ENCODE measurements at regions of chr6 and their contacts with region 1.

Region 1: GRCh38 chr6:41878246-41878645 is 16.9 kb downstream of the USP49 start:
- DNase-seq: no peak
- H3K4me3 ChIP-seq: no peak overlapping the region
- H3K27ac ChIP-seq: no peak overlapping the region
- H3K4me1 ChIP-seq: no peaks in the 10 kb centered on the region
- H3K27me3 ChIP-seq: no peaks in the 10 kb centered on the region
- CTCF ChIP-seq: no peak
- EP300 ChIP-seq: no peak
- POLR2A ChIP-seq: no peak

Region 2: DNA sequence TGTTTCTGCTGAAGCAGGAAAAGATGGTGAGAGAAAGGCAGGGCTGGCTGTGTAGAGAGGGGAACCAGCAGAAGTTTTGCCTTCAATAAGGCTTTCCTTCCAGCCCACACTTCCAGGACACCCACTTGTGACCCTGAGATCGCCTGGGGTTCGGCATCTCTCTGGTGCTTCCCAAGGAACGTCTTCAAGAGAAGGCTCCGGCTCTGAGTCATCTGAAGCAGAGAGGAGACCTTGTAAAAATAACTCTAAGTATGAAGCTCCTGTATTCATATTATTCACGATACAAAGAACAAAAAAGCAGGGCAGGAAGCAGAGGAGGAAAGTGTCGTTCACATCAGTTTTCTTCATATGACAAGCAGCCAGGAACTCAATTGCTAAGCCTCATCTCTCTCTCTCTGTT is 434.8 kb after region 1 on chr6:
- in situ Hi-C with region 1: no loop called
- intact Hi-C with region 1: no loop called
- DNase-seq: no peak
- H3K4me3 ChIP-seq: no peak overlapping the region
- H3K27ac ChIP-seq: peak overlapping the region; percentile 37 to 75 (median 64)
- H3K4me1 ChIP-seq: peaks cover 0 to 31% (median 12%) of the 10 kb centered on the region in 4 donors
- H3K27me3 ChIP-seq: no peaks in the 10 kb centered on the region
- CTCF ChIP-seq: no peak
- EP300 ChIP-seq: no peak
- POLR2A ChIP-seq: no peak

Region 3: GRCh38 chr6:43138267-43138666 is 1260.0 kb after region 1 on chr6:
- in situ Hi-C with region 1: no loop called
- intact Hi-C with region 1: loop called (anchors 5 kb)
- DNase-seq: no peak
- H3K4me3 ChIP-seq: no peak overlapping the region
- H3K27ac ChIP-seq: no peak overlapping the region
- H3K4me1 ChIP-seq: peaks cover 0 to 4% (median 3%) of the 10 kb centered on the region in 4 donors
- H3K27me3 ChIP-seq: no peaks in the 10 kb centered on the region
- CTCF ChIP-seq: no peak
- EP300 ChIP-seq: no peak
- POLR2A ChIP-seq: no peak

Measured in transverse colon (tissue), 4 donors.